Cardiac septum (tissue), 1 donor: ENCODE measurements at regions of chr10 and their contacts with region 1.

Region 1: GRCh38 chr10:94402015-94402842 is at the start of gene TBC1D12:
- DNase-seq: peak; percentile 96
- total RNA-seq, gene TBC1D12: 6.3 TPM

Region 2: GRCh38 chr10:94327649-94328048 is 74.6 kb before region 1 on chr10:
- intact Hi-C with region 1: no loop called
- DNase-seq: no peak

Region 3: DNA sequence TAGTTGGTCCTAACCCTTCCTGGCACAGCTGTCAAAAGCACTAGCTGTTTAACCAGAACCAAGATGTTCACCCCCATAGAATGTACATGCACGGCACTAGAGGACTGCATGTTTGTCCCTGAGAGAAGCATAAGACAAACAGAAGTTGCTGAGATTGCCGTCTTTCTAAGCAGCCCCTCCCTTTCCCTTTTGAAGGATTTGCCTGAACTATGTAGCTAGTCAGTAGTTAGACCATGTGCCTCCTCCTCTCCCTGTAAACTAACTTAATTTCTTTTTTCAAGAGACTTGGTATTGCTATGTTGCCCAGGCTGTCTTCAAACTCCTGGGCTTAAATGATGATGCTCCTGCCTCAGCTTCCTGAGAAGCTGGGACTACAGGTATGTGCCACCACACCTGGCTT is 40.8 kb after region 1 on chr10:
- intact Hi-C with region 1: loop called (anchors 5 kb)
- DNase-seq: no peak

Region 4: DNA sequence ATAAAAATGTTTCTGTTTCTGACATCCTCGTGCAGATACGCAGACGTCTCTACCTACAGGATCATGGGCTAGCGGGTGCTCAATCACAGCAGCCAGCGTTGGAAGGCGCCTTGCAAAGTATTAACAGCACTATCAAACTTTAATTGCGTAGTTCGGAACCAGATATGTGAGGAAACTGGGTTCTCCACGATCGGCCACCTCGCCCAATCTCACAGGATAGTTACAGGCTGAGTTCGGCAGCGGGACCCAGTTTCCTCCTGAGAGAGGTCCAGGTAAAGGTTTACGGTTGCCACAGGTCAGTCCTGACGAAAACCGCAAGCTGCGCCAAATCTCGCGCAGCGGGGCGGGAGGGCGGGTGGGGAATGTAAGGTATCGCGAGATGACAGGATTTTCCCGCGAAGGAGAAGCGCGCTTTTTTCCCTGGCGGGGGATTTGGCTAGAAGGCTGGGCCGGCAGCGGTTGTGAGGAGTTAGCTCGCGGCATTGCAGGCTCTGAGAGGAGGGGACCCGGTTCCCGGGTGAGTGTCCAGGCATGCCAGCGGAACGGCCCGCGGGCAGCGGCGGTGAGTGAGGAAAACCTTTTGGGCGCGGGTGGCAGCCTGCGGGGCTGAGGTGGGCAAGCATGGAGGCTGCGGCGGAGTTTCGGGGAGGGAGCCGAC is 143.3 kb after region 1 on chr10 and contains the start of gene HELLS:
- intact Hi-C with region 1: no loop called
- DNase-seq: peak; percentile 80
- total RNA-seq, gene HELLS: 0.86 TPM